ENCODE measurements at regions of chr17 and their contacts with region 1.

Region 1: DNA sequence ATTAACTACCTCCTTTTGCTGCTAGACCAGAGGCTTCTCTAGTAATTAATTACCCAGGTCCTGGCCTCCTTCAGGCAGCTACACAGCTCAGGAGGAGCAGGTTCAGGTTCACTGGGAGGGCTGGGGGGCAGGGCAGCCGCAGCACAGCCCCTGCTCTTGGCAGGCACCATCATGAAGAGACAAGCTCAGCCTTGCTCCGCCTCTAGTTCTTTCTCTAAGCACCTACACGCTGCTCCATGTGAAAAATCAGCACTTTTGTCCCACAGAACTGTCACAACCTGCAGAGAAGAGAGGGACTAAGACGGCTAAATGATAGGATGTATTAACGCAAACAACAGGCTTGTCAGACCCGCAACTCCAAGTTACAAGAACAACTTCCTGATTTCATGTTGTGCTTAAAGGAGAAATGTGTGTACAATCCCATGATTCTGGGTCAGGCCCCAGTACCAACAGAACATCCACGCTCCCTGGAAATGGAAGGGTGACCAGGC is 53.4 kb downstream of the GRB2 start:
- DNase-seq: peak; percentile 75
- H3K4me3 Mint-ChIP-seq: peak overlapping the region; percentile 45
- H3K27ac Mint-ChIP-seq: no peak overlapping the region
- H3K4me1 Mint-ChIP-seq: peaks cover 56% of the 10 kb centered on the region
- H3K27me3 Mint-ChIP-seq: no peaks in the 10 kb centered on the region
- CTCF ChIP-seq: no peak

Region 2: GRCh38 chr17:75393523-75394331 is 41.6 kb after region 1 on chr17:
- CTCF ChIA-PET with region 1: interaction called, 3 read pairs
- intact Hi-C with region 1: loop called (anchors 5 kb)
- DNase-seq: peak; percentile 98
- H3K4me3 Mint-ChIP-seq: peak overlapping the region; percentile 96
- H3K27ac Mint-ChIP-seq: peak overlapping the region; percentile 92
- H3K4me1 Mint-ChIP-seq: peaks cover 49% of the 10 kb centered on the region
- H3K27me3 Mint-ChIP-seq: no peaks in the 10 kb centered on the region
- CTCF ChIP-seq: no peak

Measured in Calu3 (cell line).